ENCODE measurements at regions of chr11 and their contacts with region 1.

Region 1: GRCh38 chr11:113974741-113975470 is at the start of gene HTR3A:
- DNase-seq: peak; percentile 61
- H3K4me3 ChIP-seq: no peak within 1 kb of the TSS
- H3K27ac ChIP-seq: no peak within 1 kb of the TSS
- H3K4me1 ChIP-seq: no peaks in the 10 kb centered on the region
- H3K27me3 ChIP-seq: no peaks in the 10 kb centered on the region
- CTCF ChIP-seq: no peak
- total RNA-seq, gene HTR3A: 0.90 TPM in 1 of 2 donors, not detected in the other

Region 2: DNA sequence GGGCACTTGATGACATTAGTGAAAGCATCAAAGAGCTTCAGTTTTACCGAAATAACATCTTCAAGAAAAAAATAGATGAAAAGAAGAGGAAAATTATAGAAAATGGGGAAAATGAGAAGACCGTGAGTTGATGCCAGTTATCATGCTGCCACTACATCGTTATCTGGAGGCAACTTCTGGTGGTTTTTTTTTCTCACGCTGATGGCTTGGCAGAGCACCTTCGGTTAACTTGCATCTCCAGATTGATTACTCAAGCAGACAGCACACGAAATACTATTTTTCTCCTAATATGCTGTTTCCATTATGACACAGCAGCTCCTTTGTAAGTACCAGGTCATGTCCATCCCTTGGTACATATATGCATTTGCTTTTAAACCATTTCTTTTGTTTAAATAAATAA is 474.9 kb after region 1 on chr11:
- intact Hi-C with region 1: loop called (anchors 5 kb)
- DNase-seq: no peak
- H3K4me3 ChIP-seq: no peak overlapping the region
- H3K27ac ChIP-seq: no peak overlapping the region
- H3K4me1 ChIP-seq: no peaks in the 10 kb centered on the region
- H3K27me3 ChIP-seq: no peaks in the 10 kb centered on the region
- CTCF ChIP-seq: no peak